ENCODE measurements at regions of chr4 and their contacts with region 1.

Region 1: DNA sequence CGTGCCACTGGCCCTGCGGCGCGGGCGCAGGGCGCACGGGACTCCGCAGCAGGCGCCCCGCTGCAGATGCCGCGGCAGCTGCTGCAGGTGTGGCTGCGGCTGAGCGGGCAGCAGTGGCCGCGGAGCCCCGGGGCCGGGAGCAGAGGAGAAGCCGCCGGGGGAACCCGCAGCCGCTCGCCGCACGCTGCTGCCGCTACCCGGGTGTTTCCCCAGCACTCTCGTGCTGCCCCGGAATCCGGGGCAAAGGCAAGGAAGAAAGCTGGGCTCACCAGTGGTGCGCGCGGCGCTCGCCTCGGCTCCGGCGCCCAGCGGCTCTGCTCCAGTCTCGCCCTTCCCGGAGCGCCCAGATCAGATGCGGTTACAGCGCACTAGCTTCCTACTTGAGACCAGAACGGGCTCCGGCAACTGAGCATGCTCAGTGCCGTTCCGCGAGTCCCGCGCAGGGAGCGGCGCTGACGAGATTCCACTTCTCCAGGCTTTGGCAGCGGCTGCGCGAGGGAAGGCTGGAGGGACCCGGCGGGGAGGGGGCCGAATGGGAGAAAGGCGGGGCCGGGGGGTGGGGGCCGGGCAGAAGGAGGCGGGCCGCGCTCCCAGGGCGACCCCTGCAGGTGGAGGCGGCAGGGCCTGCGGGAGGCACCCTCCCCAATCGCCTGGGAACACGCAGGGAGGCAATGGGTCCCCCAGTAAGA is at the start of gene APBB2:
- DNase-seq: peak; percentile 96
- H3K4me3 ChIP-seq: peak within 1 kb of the TSS; percentile 93
- H3K27ac ChIP-seq: peak within 1 kb of the TSS; percentile 65
- H3K27me3 ChIP-seq: no peaks in the 10 kb centered on the region
- CTCF ChIP-seq: peak; percentile 74
- polyA plus RNA-seq, gene APBB2: 52.7 and 52.8 TPM in 2 replicates

Region 2: GRCh38 chr4:40788331-40788730 is 425.9 kb before region 1 on chr4:
- CTCF ChIA-PET with region 1: no interaction called
- POLR2A ChIA-PET with region 1: no interaction called
- DNase-seq: no peak
- H3K4me3 ChIP-seq: no peak overlapping the region
- H3K27ac ChIP-seq: no peak overlapping the region
- H3K27me3 ChIP-seq: peaks cover 5% of the 10 kb centered on the region
- CTCF ChIP-seq: no peak

Region 3: GRCh38 chr4:40908702-40909362 is 305.4 kb before region 1 on chr4:
- CTCF ChIA-PET with region 1: interaction called, 12 read pairs
- POLR2A ChIA-PET with region 1: no interaction called
- DNase-seq: peak; percentile 44
- H3K4me3 ChIP-seq: no peak overlapping the region
- H3K27ac ChIP-seq: peak overlapping the region; percentile 54
- H3K27me3 ChIP-seq: no peaks in the 10 kb centered on the region
- CTCF ChIP-seq: peak; percentile 91

Region 4: GRCh38 chr4:40940317-40940741 is 274.0 kb before region 1 on chr4:
- CTCF ChIA-PET with region 1: interaction called, 15 read pairs
- POLR2A ChIA-PET with region 1: no interaction called
- DNase-seq: no peak
- H3K4me3 ChIP-seq: no peak overlapping the region
- H3K27ac ChIP-seq: no peak overlapping the region
- H3K27me3 ChIP-seq: no peaks in the 10 kb centered on the region
- CTCF ChIP-seq: no peak

Region 5: DNA sequence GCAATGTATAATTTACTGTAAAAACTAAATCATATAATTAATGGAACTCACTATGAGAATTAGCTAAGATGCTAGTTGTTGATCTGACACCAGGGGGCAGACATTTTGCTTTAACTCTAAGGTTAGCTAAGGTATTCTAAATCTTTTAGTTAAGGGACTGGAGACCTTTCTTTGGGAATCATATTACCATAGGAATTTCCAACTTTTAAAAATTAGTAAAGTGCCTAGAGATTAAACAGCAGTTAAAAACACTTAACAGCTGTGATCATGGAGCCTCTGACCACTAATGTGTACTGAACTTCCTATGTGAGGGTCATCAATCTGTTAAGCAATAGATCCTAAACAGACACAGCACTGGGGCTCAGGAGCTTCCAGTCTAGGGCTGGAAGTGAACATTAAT is 237.9 kb before region 1 on chr4:
- CTCF ChIA-PET with region 1: interaction called, 54 read pairs
- POLR2A ChIA-PET with region 1: interaction called, 10 read pairs
- DNase-seq: peak; percentile 41
- H3K4me3 ChIP-seq: no peak overlapping the region
- H3K27ac ChIP-seq: no peak overlapping the region
- H3K27me3 ChIP-seq: no peaks in the 10 kb centered on the region
- CTCF ChIP-seq: peak; percentile 76

Region 6: GRCh38 chr4:41160012-41160789 is 54.1 kb before region 1 on chr4:
- CTCF ChIA-PET with region 1: interaction called, 5 read pairs
- POLR2A ChIA-PET with region 1: interaction called, 10 read pairs
- DNase-seq: no peak
- H3K4me3 ChIP-seq: no peak overlapping the region
- H3K27ac ChIP-seq: peak overlapping the region; percentile 58
- H3K27me3 ChIP-seq: no peaks in the 10 kb centered on the region
- CTCF ChIP-seq: no peak

Region 7: DNA sequence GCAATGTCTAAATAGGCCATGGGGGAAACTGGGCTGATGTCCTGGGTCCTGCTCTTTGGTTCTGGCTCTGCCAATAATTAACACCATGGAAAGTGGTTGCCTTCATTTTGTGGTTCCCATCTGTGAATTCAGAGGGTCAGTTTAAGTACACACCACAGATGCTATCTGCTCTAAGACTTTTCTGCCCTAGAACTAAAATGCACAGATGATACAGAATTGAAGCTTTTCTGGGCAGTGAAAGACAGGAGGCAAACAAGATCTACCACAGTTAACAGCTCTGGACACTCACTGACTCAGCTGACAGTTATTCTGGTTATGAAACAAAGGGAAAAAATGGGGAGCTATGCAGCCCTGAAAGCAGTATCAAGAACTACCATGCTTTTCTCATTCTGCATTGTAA is 37.3 kb before region 1 on chr4:
- CTCF ChIA-PET with region 1: interaction called, 11 read pairs
- POLR2A ChIA-PET with region 1: interaction called, 12 read pairs
- DNase-seq: no peak
- H3K4me3 ChIP-seq: no peak overlapping the region
- H3K27ac ChIP-seq: peak overlapping the region; percentile 82
- H3K27me3 ChIP-seq: no peaks in the 10 kb centered on the region
- CTCF ChIP-seq: peak; percentile 29; the same call in 1 of the 2 replicates

Region 8: GRCh38 chr4:41496977-41497376 is 282.7 kb after region 1 on chr4:
- CTCF ChIA-PET with region 1: no interaction called
- POLR2A ChIA-PET with region 1: no interaction called
- DNase-seq: no peak
- H3K4me3 ChIP-seq: no peak overlapping the region
- H3K27ac ChIP-seq: no peak overlapping the region
- H3K27me3 ChIP-seq: no peaks in the 10 kb centered on the region
- CTCF ChIP-seq: no peak